AG04449 (cell line): ENCODE measurements at regions of chr9 and their contacts with region 1.

Region 1: GRCh38 chr9:70111042-70111602 is 67.5 kb downstream of the MAMDC2 start:
- DNase-seq: no peak
- H3K4me3 ChIP-seq: no peak overlapping the region
- CTCF ChIP-seq: peak; percentile 79

Region 2: DNA sequence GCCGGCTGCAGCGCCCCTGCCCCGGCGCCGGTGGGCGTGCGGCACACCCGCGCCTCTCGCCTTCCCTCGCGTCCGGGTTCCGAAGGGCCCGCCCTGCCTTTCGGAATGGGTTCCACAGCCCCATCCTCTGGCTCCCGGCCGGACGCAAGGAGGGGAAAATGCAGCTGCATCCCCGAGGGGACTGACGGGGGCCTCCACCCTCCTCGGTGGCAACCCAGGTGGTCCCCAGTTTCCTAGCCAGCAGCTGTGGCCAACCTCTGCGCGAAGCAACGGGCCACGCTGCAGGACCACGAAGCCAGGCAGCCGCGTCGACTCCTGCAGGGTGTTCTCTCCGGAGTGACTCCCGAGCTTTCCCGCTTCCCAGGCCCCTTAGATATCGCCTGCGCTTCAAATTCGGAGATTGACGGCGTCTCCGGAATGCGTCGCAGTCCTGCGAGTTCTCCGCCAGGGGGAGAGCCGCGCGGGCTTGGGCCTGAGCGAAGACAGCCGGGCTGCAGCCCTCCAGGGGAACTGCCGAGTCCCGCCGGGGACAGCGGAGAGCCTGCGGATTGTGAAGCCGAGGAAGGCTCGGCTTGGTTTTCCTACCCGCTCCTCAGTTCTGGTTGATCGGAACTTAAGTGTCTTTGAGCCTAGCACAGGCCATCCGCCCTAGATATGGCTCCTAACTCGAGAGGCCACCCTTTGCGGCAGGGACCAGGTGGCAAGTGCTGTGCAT is 438.4 kb before region 1 on chr9:
- CTCF ChIA-PET with region 1: interaction called, 20 read pairs
- POLR2A ChIA-PET with region 1: no interaction called
- DNase-seq: peak; percentile 33
- H3K4me3 ChIP-seq: peak overlapping the region; percentile 82
- CTCF ChIP-seq: peak; percentile 99

Region 3: DNA sequence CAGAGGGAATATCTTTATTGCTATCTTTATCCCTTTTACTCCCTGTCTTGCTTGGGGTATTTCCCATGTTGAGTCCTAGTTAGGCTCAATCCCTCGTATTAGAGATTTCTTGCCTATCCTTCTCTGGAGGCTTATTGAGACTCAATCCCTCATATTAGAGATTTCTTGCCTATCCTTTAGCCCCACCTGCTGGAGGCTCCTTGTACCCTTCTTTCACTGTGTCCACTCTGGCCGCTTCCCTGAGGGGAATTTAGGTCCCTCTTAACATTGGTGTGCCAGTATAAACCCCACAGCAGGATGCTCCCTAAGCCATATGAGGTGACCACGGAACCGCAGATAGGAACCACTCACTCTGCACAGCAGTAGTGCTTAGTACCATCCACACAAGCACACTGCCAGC is 178.2 kb before region 1 on chr9:
- CTCF ChIA-PET with region 1: interaction called, 15 read pairs
- POLR2A ChIA-PET with region 1: no interaction called
- DNase-seq: no peak
- H3K4me3 ChIP-seq: no peak overlapping the region
- CTCF ChIP-seq: no peak

Region 4: GRCh38 chr9:69981686-69982450 is 129.3 kb before region 1 on chr9:
- CTCF ChIA-PET with region 1: interaction called, 385 read pairs
- POLR2A ChIA-PET with region 1: no interaction called
- DNase-seq: no peak
- H3K4me3 ChIP-seq: no peak overlapping the region
- CTCF ChIP-seq: no peak

Region 5: DNA sequence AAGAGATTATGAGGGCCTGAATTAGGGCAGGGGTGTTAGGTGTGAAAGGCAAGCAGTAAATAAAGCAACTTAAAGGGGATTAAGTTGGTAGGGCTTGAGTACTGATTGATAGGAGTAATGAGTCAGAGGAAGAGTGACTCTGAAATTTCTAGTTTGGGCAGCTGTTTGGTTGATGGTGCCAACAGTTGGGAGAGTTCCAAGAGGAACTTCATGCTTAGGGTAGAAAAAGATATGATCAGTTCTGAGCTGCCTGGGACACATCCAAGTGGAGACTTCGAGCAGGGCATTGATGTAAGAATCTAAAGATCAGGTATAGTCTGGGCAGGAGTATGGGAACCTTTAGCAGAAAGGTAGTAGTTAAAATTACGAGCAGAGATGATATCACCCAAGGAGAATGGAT is 57.3 kb before region 1 on chr9:
- CTCF ChIA-PET with region 1: interaction called, 21 read pairs
- POLR2A ChIA-PET with region 1: no interaction called
- DNase-seq: no peak
- H3K4me3 ChIP-seq: no peak overlapping the region
- CTCF ChIP-seq: no peak

Region 6: GRCh38 chr9:70100362-70100761 is 10.8 kb before region 1 on chr9:
- CTCF ChIA-PET with region 1: interaction called, 108 read pairs
- POLR2A ChIA-PET with region 1: no interaction called
- DNase-seq: no peak
- H3K4me3 ChIP-seq: no peak overlapping the region
- CTCF ChIP-seq: no peak

Region 7: GRCh38 chr9:70258692-70259511 is 147.8 kb after region 1 on chr9 and contains the start of gene SMC5:
- CTCF ChIA-PET with region 1: interaction called, 20 read pairs
- POLR2A ChIA-PET with region 1: interaction called, 3 read pairs
- DNase-seq: no peak
- H3K4me3 ChIP-seq: peak within 1 kb of the TSS; percentile 87
- CTCF ChIP-seq: no peak